ENCODE measurements at regions of chr1 and their contacts with region 1.

Region 1: DNA sequence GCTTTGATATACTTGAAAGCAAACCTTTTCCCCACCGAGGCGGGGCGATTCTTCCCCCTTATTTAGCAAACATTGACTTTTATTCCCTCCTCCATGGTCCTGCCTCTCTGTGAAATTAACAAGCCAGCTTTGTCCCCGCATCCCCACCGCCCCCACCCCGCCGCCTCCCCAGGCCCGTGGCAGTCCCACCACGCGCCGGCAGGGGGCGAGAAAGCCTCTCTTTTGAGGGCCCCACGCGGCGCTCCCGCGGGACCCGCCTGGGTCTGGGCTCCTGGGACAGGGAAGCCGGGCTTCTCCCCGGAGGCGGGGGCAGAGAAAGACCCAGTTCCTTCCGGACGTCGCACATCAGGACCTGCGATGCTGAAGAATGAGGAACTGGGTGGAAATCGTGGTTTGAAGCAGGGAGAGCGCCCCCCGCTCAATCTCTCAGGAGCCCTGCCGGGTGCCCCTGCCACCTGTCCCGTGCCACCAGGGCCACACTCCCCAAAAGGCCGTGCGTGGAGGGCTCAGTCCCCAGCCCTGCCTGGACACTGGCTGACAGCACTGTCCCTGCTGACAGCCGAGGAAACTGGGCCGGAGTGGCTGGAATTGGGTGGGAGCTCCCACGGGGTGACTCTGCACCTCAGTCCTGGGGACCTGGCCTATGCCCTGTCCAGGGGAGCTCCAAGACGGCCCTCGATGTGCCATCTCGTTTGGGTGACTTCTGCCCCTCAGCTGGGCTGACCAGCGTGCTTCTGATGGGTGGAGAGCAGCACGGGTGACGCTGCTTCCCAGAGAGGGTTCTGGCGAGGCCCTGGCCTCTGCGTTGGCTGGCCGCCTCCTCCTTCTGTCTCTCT is 8.6 kb upstream of the ACTRT2 start:
- DNase-seq: peak; percentile 77
- ATAC-seq: peak; percentile 82
- H3K4me3 Mint-ChIP-seq: no peak overlapping the region
- H3K27ac Mint-ChIP-seq: no peak overlapping the region
- H3K4me1 Mint-ChIP-seq: peaks cover 12% of the 10 kb centered on the region
- H3K27me3 Mint-ChIP-seq: peaks cover 20% of the 10 kb centered on the region
- CTCF ChIP-seq: peak; percentile 80

Region 2: GRCh38 chr1:2865571-2866421 is 146.9 kb before region 1 on chr1:
- CTCF ChIA-PET with region 1: no interaction called
- POLR2A ChIA-PET with region 1: no interaction called
- DNase-seq: no peak
- ATAC-seq: no peak
- H3K4me3 Mint-ChIP-seq: no peak overlapping the region
- H3K27ac Mint-ChIP-seq: no peak overlapping the region
- H3K4me1 Mint-ChIP-seq: no peaks in the 10 kb centered on the region
- H3K27me3 Mint-ChIP-seq: no peaks in the 10 kb centered on the region; the same call in 1 of the 2 replicates
- CTCF ChIP-seq: no peak

Region 3: GRCh38 chr1:3060601-3061551 is 48.2 kb after region 1 on chr1:
- CTCF ChIA-PET with region 1: interaction called, 11 read pairs
- POLR2A ChIA-PET with region 1: no interaction called
- DNase-seq: no peak
- ATAC-seq: no peak
- H3K4me3 Mint-ChIP-seq: no peak overlapping the region
- H3K27ac Mint-ChIP-seq: no peak overlapping the region
- H3K4me1 Mint-ChIP-seq: peaks cover 7% of the 10 kb centered on the region; the same call in 1 of the 2 replicates
- H3K27me3 Mint-ChIP-seq: peaks cover 84% of the 10 kb centered on the region
- CTCF ChIP-seq: no peak